Heart left ventricle (tissue), 16 donors: ENCODE measurements at regions of chr1 and their contacts with region 1.

Region 1: DNA sequence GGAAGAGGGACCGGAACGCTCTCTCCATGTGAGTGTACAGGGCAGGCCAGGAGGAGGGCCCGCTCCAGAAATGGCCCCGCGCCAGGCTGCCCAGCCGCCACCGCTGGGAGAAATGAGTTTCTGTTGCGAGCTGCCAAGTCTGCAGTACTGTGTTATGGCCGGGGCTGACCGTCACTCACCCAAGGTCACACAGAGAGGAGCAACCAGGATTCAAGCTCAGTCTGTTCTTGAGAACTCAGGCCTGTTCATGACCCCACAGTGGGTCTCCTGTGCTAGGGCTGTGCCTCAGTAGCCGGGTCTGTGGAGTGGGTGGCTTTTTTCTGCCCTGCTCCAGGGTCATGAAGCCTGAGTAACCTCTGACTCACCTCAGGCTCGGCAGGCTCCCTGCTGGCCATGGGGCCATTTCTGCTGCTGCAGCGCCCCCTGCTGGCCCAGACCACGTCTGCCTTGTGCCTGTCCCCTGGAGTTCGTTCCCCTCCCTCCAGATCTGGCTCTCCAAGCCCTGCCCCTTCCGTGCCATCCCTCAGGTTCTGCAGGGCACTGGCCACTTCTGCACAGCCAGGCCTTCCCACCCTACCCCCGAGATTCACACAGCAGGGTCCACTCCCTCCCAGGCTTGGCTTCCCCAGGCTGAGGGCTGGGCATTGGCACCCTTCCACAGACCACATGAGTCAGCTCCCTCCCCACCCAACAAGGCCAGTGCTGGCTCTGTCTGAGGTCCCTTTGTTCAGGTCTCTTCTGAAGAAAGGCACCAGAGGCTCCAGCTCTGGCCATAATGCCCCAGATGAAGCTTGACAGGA is 51.8 kb downstream of the EDN2 start:
- DNase-seq: peak; percentile 83 to 93 (median 92)
- ATAC-seq: peak; percentile 85 to 92 (median 90)
- H3K4me3 ChIP-seq: peak overlapping the region in 1 of 12 donors; percentile 12
- H3K27ac ChIP-seq: peak overlapping the region; percentile 29 to 90 (median 79)
- H3K4me1 ChIP-seq: peaks cover 5 to 41% (median 22%) of the 10 kb centered on the region in 12 donors
- H3K27me3 ChIP-seq: peaks cover 0 to 11% (median 0%) of the 10 kb centered on the region in 9 donors
- CTCF ChIP-seq: peak; percentile 81 to 97 (median 90)
- POLR2A ChIP-seq: no peak

Region 2: DNA sequence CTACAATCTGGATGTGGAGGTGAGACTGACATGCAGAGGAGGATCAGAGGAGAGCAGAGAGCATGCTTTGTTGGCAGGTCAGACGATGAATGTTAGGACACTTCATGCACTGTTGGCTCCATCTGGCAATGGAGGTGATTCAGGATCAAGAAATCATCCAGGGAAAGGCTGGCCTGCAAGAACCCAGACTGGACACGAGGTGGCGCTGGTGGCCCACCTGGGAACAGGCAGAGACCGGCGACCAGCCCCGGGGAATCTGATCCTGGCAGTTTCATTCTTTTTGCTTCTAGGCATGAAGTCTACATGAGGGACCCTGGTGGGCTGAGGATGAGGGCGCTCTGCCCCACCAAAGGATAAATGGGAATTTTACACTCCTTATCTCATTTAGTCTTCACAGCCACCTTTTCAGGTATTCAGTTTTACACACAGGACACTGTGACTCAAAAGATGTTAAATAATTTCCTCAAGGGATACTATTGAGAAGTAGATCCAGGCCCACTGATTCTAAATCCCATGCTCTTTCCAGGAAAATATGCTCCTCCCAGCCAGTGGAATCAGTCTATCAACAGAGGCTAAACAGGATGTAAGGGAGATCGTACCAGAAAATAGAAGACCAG is 164.4 kb before region 1 on chr1:
- intact Hi-C with region 1: loop called in 8 of 10 experiments (anchors 1 to 5 kb)
- DNase-seq: peak; percentile 69 to 84 (median 73)
- ATAC-seq: peak; percentile 42 to 85 (median 76)
- H3K4me3 ChIP-seq: no peak overlapping the region
- H3K27ac ChIP-seq: no peak overlapping the region
- H3K4me1 ChIP-seq: peaks cover 0 to 5% (median 0%) of the 10 kb centered on the region in 12 donors
- H3K27me3 ChIP-seq: no peaks in the 10 kb centered on the region
- CTCF ChIP-seq: peak; percentile 94 to 99 (median 98)
- POLR2A ChIP-seq: no peak

Region 3: GRCh38 chr1:41282679-41283317 is 149.9 kb before region 1 on chr1:
- intact Hi-C with region 1: loop called in 1 of 10 experiments (anchors 5 kb)
- DNase-seq: peak in 1 of 5 donors; percentile 34
- ATAC-seq: peak; percentile 12 to 82 (median 68)
- H3K4me3 ChIP-seq: no peak overlapping the region
- H3K27ac ChIP-seq: no peak overlapping the region
- H3K4me1 ChIP-seq: peaks cover 0 to 16% (median 3%) of the 10 kb centered on the region in 12 donors
- H3K27me3 ChIP-seq: peaks cover 0 to 8% (median 0%) of the 10 kb centered on the region in 9 donors
- CTCF ChIP-seq: peak; percentile 57 to 86 (median 76)
- POLR2A ChIP-seq: no peak

Region 4: GRCh38 chr1:41315146-41315822 is 117.4 kb before region 1 on chr1:
- intact Hi-C with region 1: loop called in 1 of 10 experiments (anchors 5 kb)
- DNase-seq: no peak
- ATAC-seq: no peak
- H3K4me3 ChIP-seq: no peak overlapping the region
- H3K27ac ChIP-seq: no peak overlapping the region
- H3K4me1 ChIP-seq: peaks cover 0 to 21% (median 13%) of the 10 kb centered on the region in 12 donors
- H3K27me3 ChIP-seq: no peaks in the 10 kb centered on the region
- CTCF ChIP-seq: no peak
- POLR2A ChIP-seq: no peak

Region 5: DNA sequence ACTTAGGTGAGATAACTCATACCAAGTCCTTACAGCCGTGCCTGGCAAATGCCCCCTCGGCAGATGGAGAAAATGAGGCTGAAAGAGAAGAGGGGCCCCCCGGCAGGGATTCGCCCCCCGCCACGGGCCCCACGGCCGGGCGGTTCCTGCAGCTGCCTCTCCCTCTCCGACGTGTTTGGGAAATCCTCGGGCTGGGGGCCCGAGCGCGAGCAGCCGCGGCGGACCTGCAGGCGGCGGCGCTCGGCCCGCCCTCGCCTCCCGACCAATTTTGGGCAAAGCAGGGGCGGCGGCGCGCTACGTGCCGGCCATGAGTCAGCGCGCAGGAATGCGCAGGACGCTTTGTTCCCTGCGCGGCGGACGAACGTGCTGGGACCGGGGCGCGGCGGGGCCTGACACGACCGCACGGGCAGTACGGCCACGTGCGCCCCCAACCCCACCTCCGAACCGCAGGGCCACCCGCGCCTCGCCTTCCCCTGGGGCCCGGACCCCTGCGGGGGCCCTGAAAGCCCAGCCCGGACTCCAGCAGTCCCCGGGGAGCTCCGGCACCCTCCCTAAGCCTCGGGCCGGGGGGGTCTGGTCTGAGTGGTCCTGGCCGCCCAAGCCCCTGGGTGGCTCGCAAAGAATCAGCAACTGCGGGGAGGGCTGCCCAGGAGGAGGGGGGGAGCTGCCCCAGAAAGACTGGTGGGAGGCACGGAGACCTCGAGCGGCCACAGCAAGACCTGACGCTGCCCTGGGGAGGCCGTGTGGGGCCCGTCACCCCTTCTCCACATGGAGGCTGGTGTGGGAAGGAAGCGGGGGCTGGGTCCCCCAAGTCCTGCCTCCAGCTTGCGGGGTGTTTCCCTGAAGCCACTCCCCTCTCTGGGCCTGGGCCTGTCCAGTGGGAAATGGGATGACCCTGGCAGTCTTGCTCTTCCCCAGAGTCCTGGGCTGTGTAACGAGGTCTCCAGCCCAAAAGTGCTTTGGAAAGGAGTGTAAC is 63.7 kb after region 1 on chr1:
- intact Hi-C with region 1: loop called in 1 of 10 experiments (anchors 5 kb)
- DNase-seq: peak; percentile 86 to 95 (median 91)
- ATAC-seq: peak; percentile 60 to 81 (median 78)
- H3K4me3 ChIP-seq: peak overlapping the region in 11 of 12 donors; percentile 7 to 57 (median 45)
- H3K27ac ChIP-seq: peak overlapping the region; percentile 73 to 96 (median 91)
- H3K4me1 ChIP-seq: peaks cover 4 to 63% (median 38%) of the 10 kb centered on the region in 12 donors
- H3K27me3 ChIP-seq: peaks cover 0 to 11% (median 0%) of the 10 kb centered on the region in 9 donors
- CTCF ChIP-seq: peak in 6 of 12 donors; percentile 4 to 44 (median 26)
- POLR2A ChIP-seq: peak in 1 of 2 donors; percentile 69